ENCODE measurements at regions of chr13 and their contacts with region 1.

Region 1: DNA sequence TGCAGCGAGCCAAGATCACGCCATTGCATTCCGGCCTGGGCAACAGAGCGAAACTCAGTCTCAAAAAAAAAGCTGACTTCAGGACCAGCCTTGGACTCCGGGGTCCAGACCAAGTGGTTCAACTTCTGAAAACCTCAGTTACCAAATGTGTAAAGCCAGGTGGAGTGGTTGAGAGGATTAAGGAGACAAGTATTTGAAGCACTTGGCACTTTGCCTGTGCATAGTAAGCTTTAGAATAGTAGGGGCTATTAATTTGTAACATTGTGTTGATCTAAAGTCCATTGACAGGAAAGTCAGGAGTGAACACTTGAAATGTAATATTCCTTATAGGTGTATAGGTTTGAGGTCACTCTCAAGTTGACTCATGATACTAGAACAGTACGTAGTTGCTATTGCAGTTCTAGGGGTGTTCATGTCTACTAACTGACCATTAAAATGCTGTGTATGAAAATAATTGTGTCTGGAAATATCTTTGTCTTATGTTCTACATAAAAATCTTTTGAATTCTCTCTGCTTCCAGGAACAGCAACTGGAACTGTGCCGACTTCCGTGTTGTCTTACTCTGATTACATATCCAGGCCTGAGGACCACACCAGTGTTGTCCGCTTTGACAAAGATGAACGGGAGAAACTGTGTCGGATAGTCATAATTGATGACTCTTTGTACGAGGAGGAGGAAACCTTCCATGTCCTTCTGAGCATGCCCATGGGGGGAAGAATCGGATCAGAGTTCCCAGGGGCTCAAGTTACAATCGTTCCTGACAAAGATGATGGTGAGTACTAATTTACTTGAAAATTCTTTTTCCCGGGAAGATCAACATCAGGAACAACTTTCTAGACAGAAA is 97.4 kb downstream of the FREM2 start:
- DNase-seq: peak; percentile 28
- H3K4me3 Mint-ChIP-seq: peak overlapping the region; percentile 76
- H3K27ac Mint-ChIP-seq: peak overlapping the region; percentile 85
- H3K4me1 Mint-ChIP-seq: peaks cover 31% of the 10 kb centered on the region
- H3K27me3 Mint-ChIP-seq: no peaks in the 10 kb centered on the region
- CTCF ChIP-seq: no peak

Region 2: DNA sequence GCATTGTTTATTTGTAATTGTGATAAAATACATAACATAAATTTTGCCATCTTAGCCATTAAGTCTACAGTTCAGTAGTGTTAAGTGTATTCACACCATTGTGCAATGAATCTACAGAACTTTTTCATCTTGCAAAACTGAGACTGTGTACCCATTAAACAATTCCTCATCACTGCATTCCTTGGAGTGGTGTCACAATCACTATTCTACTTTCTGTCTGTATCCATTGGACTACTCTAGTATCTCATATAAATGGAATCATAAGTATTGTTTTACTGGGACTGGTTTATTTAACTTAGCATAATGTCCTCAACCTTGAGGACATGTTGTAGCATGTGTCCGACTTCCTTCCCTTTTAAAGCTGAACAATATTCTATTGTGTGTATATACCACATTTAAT is 397.8 kb before region 1 on chr13:
- CTCF ChIA-PET with region 1: no interaction called
- intact Hi-C with region 1: no loop called
- DNase-seq: no peak
- H3K4me3 Mint-ChIP-seq: no peak overlapping the region
- H3K27ac Mint-ChIP-seq: no peak overlapping the region
- H3K4me1 Mint-ChIP-seq: no peaks in the 10 kb centered on the region
- H3K27me3 Mint-ChIP-seq: no peaks in the 10 kb centered on the region
- CTCF ChIP-seq: no peak

Region 3: DNA sequence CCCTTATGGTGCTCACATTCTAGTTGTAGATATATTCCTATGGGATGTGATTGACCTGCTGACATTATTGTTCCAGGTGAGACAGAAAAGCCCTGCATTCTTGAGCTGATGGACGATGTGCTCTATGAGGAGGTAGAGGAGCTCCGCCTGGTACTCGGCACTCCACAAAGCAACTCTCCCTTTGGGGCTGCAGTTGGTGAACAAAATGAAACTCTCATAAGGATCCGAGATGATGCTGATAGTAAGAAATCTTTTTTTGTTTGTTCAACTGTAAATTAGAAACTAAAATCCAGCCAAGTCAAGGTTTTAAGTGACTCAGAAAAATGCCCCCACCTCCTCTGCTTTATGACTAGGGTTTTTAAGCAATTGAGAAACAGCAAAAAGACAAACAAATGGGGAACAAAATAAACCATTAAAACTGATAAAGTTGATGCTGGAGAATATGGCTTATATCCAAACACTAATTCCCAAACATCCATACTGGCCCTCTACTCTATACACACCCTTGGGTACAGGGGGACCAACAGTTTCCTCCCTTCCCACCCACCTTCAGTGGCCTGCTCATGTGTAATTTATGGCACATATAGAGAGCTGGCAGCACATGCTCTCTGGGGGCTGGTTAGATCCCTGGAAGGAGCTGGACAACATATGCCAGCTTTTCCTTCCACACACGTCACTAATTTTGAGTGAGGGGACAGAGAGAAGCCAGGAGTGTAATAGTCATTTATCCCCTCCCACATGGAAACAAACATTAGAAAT is 66.8 kb after region 1 on chr13:
- CTCF ChIA-PET with region 1: no interaction called
- intact Hi-C with region 1: loop called (anchors 5 kb)
- DNase-seq: no peak
- H3K4me3 Mint-ChIP-seq: no peak overlapping the region
- H3K27ac Mint-ChIP-seq: no peak overlapping the region
- H3K4me1 Mint-ChIP-seq: no peaks in the 10 kb centered on the region
- H3K27me3 Mint-ChIP-seq: no peaks in the 10 kb centered on the region
- CTCF ChIP-seq: no peak

Region 4: GRCh38 chr13:38872693-38873092 is 88.4 kb after region 1 on chr13:
- CTCF ChIA-PET with region 1: no interaction called
- intact Hi-C with region 1: loop called (anchors 2 kb)
- DNase-seq: peak; percentile 57
- H3K4me3 Mint-ChIP-seq: no peak overlapping the region
- H3K27ac Mint-ChIP-seq: no peak overlapping the region
- H3K4me1 Mint-ChIP-seq: no peaks in the 10 kb centered on the region
- H3K27me3 Mint-ChIP-seq: no peaks in the 10 kb centered on the region
- CTCF ChIP-seq: no peak

Measured in Calu3 (cell line).